ENCODE measurements at regions of chr13 and their contacts with region 1.

Region 1: GRCh38 chr13:33228648-33229445 is 56.7 kb downstream of the STARD13 start:
- DNase-seq: peak in 1 of 2 donors; percentile 66
- ATAC-seq: peak; percentile 52 to 67 (median 63)
- H3K4me3 ChIP-seq: no peak overlapping the region
- H3K4me3 Mint-ChIP-seq: no peak overlapping the region
- H3K27ac ChIP-seq: no peak overlapping the region
- H3K27ac Mint-ChIP-seq: no peak overlapping the region
- H3K4me1 ChIP-seq: no peaks in the 10 kb centered on the region
- H3K4me1 Mint-ChIP-seq: no peaks in the 10 kb centered on the region
- H3K27me3 ChIP-seq: no peaks in the 10 kb centered on the region
- H3K27me3 Mint-ChIP-seq: peaks cover 9 to 11% of the 10 kb centered on the region in 2 donors
- CTCF ChIP-seq: peak; percentile 79

Region 2: GRCh38 chr13:33723772-33724435 is 495.1 kb after region 1 on chr13:
- intact Hi-C with region 1: loop called (anchors 1 kb)
- DNase-seq: peak in 1 of 2 donors; percentile 85
- ATAC-seq: peak; percentile 54 to 76 (median 73)
- H3K4me3 ChIP-seq: no peak overlapping the region
- H3K4me3 Mint-ChIP-seq: no peak overlapping the region
- H3K27ac ChIP-seq: no peak overlapping the region
- H3K27ac Mint-ChIP-seq: peak overlapping the region in 1 of 2 donors; percentile 21
- H3K4me1 ChIP-seq: no peaks in the 10 kb centered on the region
- H3K4me1 Mint-ChIP-seq: peaks cover 15 to 21% of the 10 kb centered on the region in 2 donors
- H3K27me3 ChIP-seq: no peaks in the 10 kb centered on the region
- H3K27me3 Mint-ChIP-seq: no peaks in the 10 kb centered on the region
- CTCF ChIP-seq: peak; percentile 34

Region 3: DNA sequence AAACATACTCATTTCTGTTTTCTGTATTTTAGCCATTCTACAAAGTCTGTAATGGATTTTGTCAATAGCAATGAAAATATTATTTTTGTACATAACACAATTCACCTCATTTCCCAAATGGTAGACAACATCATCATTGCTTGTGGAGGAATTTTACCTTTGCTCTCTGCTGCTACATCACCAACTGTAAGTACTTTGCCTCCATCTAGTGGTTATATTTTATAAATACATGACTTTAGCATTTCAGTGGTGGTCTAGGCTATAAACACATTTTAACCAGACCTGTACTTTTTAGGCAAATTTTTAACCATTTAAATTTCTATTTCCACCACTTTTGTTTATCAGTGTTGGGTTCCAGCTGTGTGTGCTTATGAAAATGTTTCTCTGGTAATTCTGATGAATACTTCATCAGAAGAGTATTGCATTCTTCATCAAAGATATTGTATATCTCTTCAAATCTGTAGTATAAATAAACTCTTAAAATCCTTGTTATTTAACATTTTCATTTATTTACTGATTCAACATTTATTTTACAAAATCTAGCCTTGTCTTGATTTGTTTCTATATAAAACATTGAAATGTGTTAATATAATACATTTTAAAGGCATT is 1935.6 kb after region 1 on chr13:
- intact Hi-C with region 1: loop called (anchors 5 kb)
- DNase-seq: peak in 1 of 2 donors; percentile 43
- ATAC-seq: peak in 2 of 3 donors; percentile 38 to 58
- H3K4me3 ChIP-seq: no peak overlapping the region
- H3K4me3 Mint-ChIP-seq: no peak overlapping the region
- H3K27ac ChIP-seq: no peak overlapping the region
- H3K27ac Mint-ChIP-seq: no peak overlapping the region
- H3K4me1 ChIP-seq: no peaks in the 10 kb centered on the region
- H3K4me1 Mint-ChIP-seq: peaks cover 5% of the 10 kb centered on the region in 2 donors
- H3K27me3 ChIP-seq: no peaks in the 10 kb centered on the region
- H3K27me3 Mint-ChIP-seq: no peaks in the 10 kb centered on the region
- CTCF ChIP-seq: peak; percentile 66